Right ventricle myocardium inferior (tissue), 1 donor: ENCODE measurements at regions of chr16 and their contacts with region 1.

Region 1: GRCh38 chr16:81314603-81315270 is at the start of gene GAN:
- DNase-seq: peak; percentile 98
- ATAC-seq: peak; percentile 97
- total RNA-seq, gene GAN: 8.5 TPM

Region 2: DNA sequence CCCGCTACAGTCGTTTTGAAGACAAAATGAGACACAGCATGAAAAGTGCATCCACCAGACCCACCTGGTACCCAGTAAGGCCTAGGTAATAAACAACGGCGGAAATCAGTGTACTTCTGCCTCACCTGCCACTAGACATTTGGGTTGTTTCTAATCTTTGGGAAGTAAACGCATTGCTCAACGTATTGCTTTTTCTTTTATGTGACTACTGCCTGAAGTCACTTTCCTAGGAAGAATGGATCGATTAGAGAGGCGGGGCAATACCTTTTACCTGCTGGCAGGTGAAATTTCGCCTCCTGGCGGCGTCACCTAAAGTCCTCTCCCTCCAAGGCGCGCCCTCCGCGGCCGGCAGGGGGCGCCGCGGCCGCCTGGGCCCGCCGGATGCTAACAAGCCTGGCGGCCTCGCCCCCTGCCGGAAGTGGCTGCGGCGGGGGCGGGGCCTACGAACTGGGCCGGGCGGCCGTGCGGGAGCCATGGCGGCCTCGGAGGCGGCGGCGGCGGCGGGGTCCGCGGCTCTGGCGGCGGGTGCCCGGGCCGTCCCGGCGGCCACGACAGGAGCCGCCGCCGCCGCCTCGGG is 279.3 kb before region 1 on chr16 and contains the start of gene ATMIN:
- intact Hi-C with region 1: loop called (anchors 5 kb)
- DNase-seq: peak; percentile 96
- ATAC-seq: peak; percentile 98
- total RNA-seq, gene ATMIN: 21.2 TPM

Region 3: DNA sequence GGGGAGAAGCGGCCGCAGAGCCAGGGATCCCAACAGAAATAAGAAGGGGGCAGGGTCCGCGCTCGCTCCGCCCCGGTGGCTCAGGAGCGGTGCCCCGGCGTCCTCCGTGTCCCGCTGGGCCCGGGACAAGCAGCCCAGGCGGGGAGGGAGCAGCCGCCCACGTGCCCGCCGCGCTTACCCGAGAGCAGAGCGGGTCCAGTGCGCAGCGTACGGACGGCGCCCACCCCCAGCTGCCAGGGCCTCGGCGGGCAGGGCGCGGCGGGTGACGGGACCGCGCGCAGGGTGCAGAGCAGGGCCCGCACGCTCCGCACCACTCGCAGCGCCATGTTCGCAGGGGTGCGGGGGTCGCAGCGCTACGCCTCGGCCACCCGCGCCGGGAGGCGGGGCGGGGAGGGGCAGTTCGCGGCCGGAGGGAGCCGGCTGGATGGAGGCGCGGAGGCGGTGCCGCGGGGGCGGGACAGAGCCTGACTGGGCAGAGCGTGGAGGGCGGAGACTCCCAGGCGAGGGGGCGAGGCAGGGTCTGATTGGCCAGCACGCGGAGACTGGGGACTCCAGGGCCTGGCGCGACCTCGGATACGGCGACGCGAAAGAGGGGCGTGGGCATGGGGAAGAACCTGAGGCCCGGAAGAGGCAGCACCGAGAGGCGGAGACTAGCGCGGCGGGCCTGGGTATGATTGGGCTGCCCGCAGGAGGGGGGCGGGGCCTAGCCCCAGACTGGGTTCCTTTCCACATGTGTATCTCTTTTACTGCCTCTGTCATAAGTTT is 218.6 kb before region 1 on chr16 and contains the start of gene GCSH:
- intact Hi-C with region 1: no loop called
- DNase-seq: peak; percentile 99
- ATAC-seq: peak; percentile 100
- total RNA-seq, gene GCSH: 52.3 TPM

Region 4: DNA sequence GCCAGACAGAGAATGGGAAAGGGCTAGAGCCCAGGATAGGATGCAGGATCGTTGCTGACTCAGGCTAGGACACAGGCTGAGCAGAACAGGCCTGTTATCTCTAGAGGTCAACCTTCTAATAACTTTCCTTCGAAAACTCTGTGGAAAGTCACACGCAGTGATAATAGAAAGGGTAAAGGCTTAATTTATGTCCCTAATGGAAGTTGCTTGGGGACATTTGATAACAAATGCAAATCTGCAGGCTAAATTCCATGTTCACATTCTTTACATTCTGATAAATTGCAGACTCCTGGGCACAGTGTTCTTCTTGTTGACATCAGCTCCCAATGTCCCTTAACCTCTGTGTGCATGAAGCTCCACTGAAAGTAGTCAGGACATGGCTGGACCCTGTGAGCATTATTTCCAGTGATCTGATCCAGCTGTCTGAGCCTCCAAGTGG is 91.3 kb before region 1 on chr16:
- intact Hi-C with region 1: loop called (anchors 10 kb)
- DNase-seq: no peak
- ATAC-seq: peak; percentile 94

Region 5: DNA sequence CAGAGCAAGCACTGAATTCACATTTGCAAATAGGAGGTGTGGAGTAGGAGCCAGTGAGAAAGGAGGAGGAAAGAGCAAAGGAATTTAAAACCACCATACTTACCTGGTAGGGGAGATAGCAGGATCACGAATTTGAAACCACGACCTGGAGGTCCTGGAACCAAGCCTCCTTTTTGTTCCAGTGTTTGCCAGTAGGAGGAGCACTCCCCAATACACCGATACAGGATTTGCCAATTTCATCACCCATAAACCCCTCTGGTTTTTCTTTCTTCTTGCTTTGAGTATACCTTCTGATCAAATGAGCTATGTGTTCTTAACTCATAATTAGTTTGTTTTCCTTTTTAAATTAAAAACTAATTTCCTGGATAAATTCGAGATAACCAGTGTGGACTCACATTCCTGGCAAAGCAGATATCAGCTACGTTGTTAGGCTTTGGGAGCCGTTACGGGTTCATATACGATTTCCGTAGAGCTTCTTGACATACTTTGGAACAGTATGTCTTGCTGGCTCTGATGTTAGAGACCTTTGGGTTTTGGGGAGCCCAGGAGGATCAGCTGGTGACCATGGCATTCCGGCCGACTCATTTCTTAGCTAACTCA is 53.6 kb before region 1 on chr16:
- intact Hi-C with region 1: loop called (anchors 10 kb)
- DNase-seq: no peak
- ATAC-seq: no peak